SK-N-SH (cell line): ENCODE measurements at regions of chr2 and their contacts with region 1.

Region 1: GRCh38 chr2:231800493-231801091 is 14.3 kb downstream of the COPS7B start:
- DNase-seq: peak; percentile 59
- H3K4me3 ChIP-seq: no peak overlapping the region
- H3K27ac ChIP-seq: no peak overlapping the region
- H3K4me1 ChIP-seq: peaks cover 0 to 15% of the 10 kb centered on the region in 2 experiments; a peak in 2 of 4 replicates
- H3K27me3 ChIP-seq: no peaks in the 10 kb centered on the region
- CTCF ChIP-seq: peak; percentile 86
- EP300 ChIP-seq: no peak
- RAD21 ChIP-seq: peak; percentile 52

Region 2: GRCh38 chr2:231590619-231591018 is 210.0 kb before region 1 on chr2:
- CTCF ChIA-PET with region 1: no interaction called
- POLR2A ChIA-PET with region 1: no interaction called
- DNase-seq: no peak
- H3K4me3 ChIP-seq: no peak overlapping the region
- H3K27ac ChIP-seq: no peak overlapping the region
- H3K4me1 ChIP-seq: peaks cover 0 to 5% of the 10 kb centered on the region in 2 experiments; a peak in 1 of 4 replicates
- H3K27me3 ChIP-seq: no peaks in the 10 kb centered on the region
- CTCF ChIP-seq: no peak
- EP300 ChIP-seq: no peak
- RAD21 ChIP-seq: no peak

Region 3: DNA sequence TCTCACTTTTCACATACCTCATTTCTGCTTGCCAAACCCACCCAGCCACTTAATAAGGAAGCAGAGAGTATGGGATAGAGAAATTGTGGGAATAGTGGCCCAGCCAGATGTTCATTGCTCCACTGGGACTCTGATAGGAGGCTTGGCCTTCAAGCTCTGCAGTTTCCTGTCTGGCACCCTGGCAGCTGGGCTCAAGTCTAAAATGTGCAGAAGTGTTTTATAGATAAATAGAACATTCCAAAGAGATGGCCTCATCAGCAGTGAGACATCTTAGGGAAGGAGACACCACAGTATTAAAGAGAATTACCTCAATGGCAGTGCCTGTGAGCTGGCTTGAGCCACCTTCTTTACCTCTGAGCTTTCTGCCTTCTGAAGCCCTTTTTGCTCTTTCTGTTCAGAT is 10.3 kb after region 1 on chr2:
- CTCF ChIA-PET with region 1: interaction called, 22 read pairs
- POLR2A ChIA-PET with region 1: no interaction called
- DNase-seq: no peak
- H3K4me3 ChIP-seq: no peak overlapping the region
- H3K27ac ChIP-seq: no peak overlapping the region
- H3K4me1 ChIP-seq: 0 out of 4 replicates have a peak, but pooled peaks cover 0 to 5% of the 10 kb centered on the region in 2 experiments
- H3K27me3 ChIP-seq: no peaks in the 10 kb centered on the region
- CTCF ChIP-seq: no peak
- EP300 ChIP-seq: no peak
- RAD21 ChIP-seq: no peak